ENCODE measurements at regions of chr5 and their contacts with region 1.

Region 1: GRCh38 chr5:132410451-132411381 is 41.2 kb downstream of the SLC22A5 start:
- DNase-seq: peak; percentile 87
- H3K4me3 Mint-ChIP-seq: peak overlapping the region; percentile 90
- H3K27ac Mint-ChIP-seq: peak overlapping the region; percentile 99
- H3K4me1 Mint-ChIP-seq: peaks cover 68% of the 10 kb centered on the region
- H3K27me3 Mint-ChIP-seq: no peaks in the 10 kb centered on the region

Region 2: GRCh38 chr5:132094393-132095076 is 316.2 kb before region 1 on chr5:
- CTCF ChIA-PET with region 1: no interaction called
- intact Hi-C with region 1: loop called (anchors 5 kb)
- DNase-seq: peak; percentile 37
- H3K4me3 Mint-ChIP-seq: no peak overlapping the region
- H3K27ac Mint-ChIP-seq: no peak overlapping the region
- H3K4me1 Mint-ChIP-seq: peaks cover 33% of the 10 kb centered on the region
- H3K27me3 Mint-ChIP-seq: peaks cover 4% of the 10 kb centered on the region

Region 3: GRCh38 chr5:132134384-132134783 is 276.3 kb before region 1 on chr5:
- CTCF ChIA-PET with region 1: no interaction called
- intact Hi-C with region 1: no loop called
- DNase-seq: no peak
- H3K4me3 Mint-ChIP-seq: no peak overlapping the region
- H3K27ac Mint-ChIP-seq: no peak overlapping the region
- H3K4me1 Mint-ChIP-seq: no peaks in the 10 kb centered on the region
- H3K27me3 Mint-ChIP-seq: peaks cover 27% of the 10 kb centered on the region

Region 4: GRCh38 chr5:132426525-132427138 is 15.9 kb after region 1 on chr5:
- CTCF ChIA-PET with region 1: interaction called, 9 read pairs
- intact Hi-C with region 1: loop called (anchors 2 kb)
- DNase-seq: peak; percentile 83
- H3K4me3 Mint-ChIP-seq: peak overlapping the region; percentile 46
- H3K27ac Mint-ChIP-seq: peak overlapping the region; percentile 95
- H3K4me1 Mint-ChIP-seq: peaks cover 94% of the 10 kb centered on the region
- H3K27me3 Mint-ChIP-seq: no peaks in the 10 kb centered on the region

Region 5: GRCh38 chr5:132495667-132496190 is 85.0 kb after region 1 on chr5:
- CTCF ChIA-PET with region 1: interaction called, 73 read pairs
- intact Hi-C with region 1: loop called (anchors 1 kb)
- DNase-seq: peak; percentile 79
- H3K4me3 Mint-ChIP-seq: peak overlapping the region; percentile 84
- H3K27ac Mint-ChIP-seq: peak overlapping the region; percentile 91
- H3K4me1 Mint-ChIP-seq: peaks cover 56% of the 10 kb centered on the region
- H3K27me3 Mint-ChIP-seq: no peaks in the 10 kb centered on the region

Region 6: DNA sequence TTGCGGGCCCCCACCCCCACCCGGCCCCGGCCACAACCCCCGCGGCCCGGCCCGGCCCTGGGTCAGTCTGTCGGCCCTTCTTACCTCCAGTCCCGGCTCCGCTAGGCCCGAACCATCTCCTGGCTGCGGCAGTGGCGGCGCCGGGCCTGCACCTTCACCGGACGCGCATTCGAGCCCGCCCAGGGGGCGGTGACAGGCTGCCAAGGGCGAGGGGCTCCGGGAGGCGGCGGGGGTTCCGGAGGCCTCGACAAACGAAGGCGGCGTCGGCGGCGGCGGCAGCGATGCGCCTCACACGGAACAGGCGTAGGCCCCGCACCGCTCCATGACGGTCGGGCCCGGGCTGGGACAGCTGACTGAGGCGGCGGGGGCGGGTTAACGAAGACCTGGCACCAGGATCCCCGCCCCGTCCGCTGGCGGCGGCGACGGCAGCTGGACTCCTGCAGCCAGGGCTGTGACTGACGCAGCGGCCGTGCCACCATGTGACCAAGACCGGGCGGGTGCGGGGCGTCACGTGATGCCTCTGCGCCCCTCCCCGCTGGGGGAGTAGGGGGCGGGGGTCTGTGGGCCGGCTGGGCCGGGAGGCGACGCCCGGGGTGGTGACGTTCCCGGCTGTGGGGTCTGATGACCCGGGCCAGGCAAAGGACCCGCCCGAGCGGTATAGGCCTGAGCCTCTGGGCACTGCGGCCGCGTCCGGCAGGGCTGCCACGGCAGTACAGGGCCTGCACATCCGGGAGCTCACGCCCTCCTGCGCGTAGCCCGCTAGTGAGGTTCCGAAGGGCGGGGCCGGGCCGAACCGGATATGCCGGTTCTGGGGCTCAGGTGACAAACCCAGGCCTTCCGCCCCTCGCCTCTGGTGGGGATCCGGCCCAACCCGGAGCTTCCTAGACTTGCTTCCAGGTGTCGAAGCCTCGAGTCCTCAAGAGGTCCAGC is 552.7 kb after region 1 on chr5 and contains the start of gene AFF4:
- CTCF ChIA-PET with region 1: no interaction called
- intact Hi-C with region 1: loop called (anchors 5 kb)
- DNase-seq: peak; percentile 86
- H3K4me3 Mint-ChIP-seq: peak within 1 kb of the TSS; percentile 95
- H3K27ac Mint-ChIP-seq: peak within 1 kb of the TSS; percentile 97
- H3K4me1 Mint-ChIP-seq: peaks cover 33% of the 10 kb centered on the region
- H3K27me3 Mint-ChIP-seq: no peaks in the 10 kb centered on the region
- total RNA-seq, gene AFF4: 13.6 to 14.2 TPM

Measured in activated naive CD4-positive, alpha-beta T cell treated with anti-CD3 and anti-CD28 coated beads for 36 hours (primary cell).